ENCODE measurements at regions of chr6 and their contacts with region 1.

Region 1: GRCh38 chr6:31441365-31442267 is 38.2 kb downstream of the MICA start:
- DNase-seq: peak; percentile 97

Region 2: DNA sequence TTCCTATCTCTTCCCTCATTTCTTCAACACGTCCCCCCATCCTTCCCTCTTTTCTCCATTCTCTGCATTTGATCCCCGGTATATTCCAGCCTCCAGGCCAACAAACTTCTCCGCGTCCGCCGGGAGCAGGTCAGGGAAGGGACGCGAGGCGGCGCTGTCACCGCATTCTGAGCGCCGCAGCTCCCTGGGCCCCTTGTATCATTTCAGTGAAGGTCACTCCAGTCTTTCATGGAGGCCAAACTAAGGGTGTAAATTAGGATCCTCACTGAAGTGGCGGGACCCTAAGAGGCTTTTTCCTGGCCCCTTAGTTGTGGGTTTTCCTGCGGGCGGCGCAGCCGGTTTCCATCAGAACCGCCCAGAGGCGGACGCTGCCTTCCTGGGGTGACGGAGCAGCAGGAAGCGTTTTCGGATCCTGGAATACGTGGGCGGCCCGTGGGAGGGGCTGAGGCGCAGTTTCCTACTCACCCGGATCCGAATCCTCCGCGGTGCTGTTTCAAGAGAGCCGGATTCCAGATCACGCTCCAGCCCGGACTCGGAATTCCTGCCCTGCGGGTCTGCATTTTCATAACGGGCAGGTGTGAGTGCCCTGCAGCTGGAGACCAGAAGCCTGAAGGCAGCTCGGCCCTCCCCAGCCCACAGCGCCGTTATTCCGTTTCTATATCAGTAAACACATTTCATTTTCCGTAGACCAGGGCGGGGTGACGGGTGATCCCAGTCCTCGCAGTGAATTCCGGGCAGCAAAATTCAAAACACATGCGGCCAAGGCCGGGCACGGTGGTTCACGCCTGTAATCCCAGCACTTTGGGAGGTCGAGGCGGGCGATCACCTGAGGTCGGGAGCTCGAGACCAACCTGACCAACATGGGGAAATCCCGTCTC is 41.8 kb before region 1 on chr6:
- intact Hi-C with region 1: loop called (anchors 2 to 5 kb)
- DNase-seq: peak; percentile 97

Measured in posterior vena cava (tissue), 2 donors.